ENCODE measurements at regions of chr3 and their contacts with region 1.

Region 1: GRCh38 chr3:24494618-24495325 is at the start of gene THRB:
- DNase-seq: peak; percentile 71 to 74
- H3K4me3 ChIP-seq: peak within 1 kb of the TSS; percentile 49 to 96 (median 82)
- H3K27ac ChIP-seq: peak within 1 kb of the TSS; percentile 88 to 97 (median 88)
- H3K4me1 ChIP-seq: peaks cover 9 to 10% of the 10 kb centered on the region in 2 donors
- H3K27me3 ChIP-seq: no peaks in the 10 kb centered on the region
- CTCF ChIP-seq: peak in 3 of 6 experiments; percentile 33 to 39 (median 34)
- POLR2A ChIP-seq: peak; percentile 31 to 76
- total RNA-seq, gene THRB: 11.1 to 33.2 (median 13.4) TPM

Region 2: DNA sequence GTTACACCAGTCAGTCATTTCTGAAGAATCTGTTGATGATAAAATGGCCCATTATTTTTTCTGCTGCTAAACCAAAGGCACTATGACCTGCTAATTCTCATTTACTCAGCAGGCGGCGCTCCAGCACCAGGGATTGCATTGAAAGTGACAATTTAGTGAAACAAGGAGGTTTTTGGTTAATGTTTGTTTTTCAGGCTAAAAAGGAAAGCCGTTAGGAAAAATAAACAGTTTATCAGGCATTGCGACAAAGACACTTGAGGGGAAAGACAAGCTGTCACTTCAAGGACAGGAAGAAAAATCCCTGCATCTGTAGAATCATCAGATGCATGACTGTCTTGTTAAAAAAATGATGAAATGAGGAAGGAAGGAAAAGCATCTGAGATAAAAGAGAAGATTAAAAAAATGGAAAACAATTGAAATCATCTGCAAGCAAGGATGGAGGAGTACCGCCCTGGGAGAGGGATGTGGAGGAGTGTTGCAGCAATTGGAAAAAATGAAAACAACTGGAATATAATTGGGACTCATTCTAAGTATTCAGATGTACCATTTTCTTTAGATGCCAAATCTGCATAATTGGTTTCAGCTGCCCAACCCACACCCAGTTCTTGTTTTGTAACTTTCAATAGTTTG is 495.6 kb before region 1 on chr3:
- intact Hi-C with region 1: loop called (anchors 10 kb)
- DNase-seq: peak; percentile 74 to 80
- H3K4me3 ChIP-seq: no peak overlapping the region
- H3K27ac ChIP-seq: no peak overlapping the region
- H3K4me1 ChIP-seq: peaks cover 0 to 6% of the 10 kb centered on the region in 2 donors
- H3K27me3 ChIP-seq: no peaks in the 10 kb centered on the region
- CTCF ChIP-seq: peak; percentile 65 to 99 (median 94)
- POLR2A ChIP-seq: no peak

Region 3: GRCh38 chr3:24264748-24265158 is 230.0 kb before region 1 on chr3:
- intact Hi-C with region 1: loop called (anchors 10 kb)
- DNase-seq: peak; percentile 16 to 29
- H3K4me3 ChIP-seq: no peak overlapping the region
- H3K27ac ChIP-seq: no peak overlapping the region
- H3K4me1 ChIP-seq: no peaks in the 10 kb centered on the region
- H3K27me3 ChIP-seq: no peaks in the 10 kb centered on the region
- CTCF ChIP-seq: peak in 5 of 6 experiments; percentile 40 to 92 (median 67)
- POLR2A ChIP-seq: no peak